T-cell (primary cell): ENCODE measurements at regions of chr17 and their contacts with region 1.

Region 1: DNA sequence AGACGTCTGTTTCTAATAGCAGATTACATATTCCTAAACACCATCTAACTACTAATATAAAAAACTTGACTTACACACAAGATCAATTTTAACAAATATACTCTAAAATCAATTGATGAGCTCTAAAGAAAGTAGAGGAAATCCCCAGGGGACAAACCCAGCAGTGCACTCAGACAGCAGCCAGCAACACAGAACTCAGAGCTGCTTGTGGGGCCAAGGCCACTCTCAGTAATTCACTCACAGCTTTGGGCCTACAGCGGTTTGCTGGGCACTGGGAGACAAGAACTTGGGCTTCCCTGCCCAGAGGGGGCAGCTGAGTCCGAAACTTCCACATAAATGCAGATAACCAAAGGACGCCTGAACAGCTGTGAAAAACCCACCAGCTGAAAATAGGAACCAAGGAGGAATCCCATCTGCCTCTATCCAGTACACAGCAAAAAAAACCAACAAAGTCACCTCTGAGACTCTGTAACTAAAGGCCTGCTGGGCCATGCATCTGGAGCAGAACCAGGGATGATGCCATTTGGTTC is 21.4 kb downstream of the NPLOC4 start:
- DNase-seq: no peak
- ATAC-seq: no peak
- H3K4me3 ChIP-seq: no peak overlapping the region
- H3K4me3 Mint-ChIP-seq: no peak overlapping the region
- H3K27ac ChIP-seq: no peak overlapping the region
- H3K27ac Mint-ChIP-seq: peak overlapping the region in 1 of 2 donors; percentile 22
- H3K4me1 ChIP-seq: peaks cover 0 to 18% of the 10 kb centered on the region in 2 experiments
- H3K4me1 Mint-ChIP-seq: peaks cover 21 to 28% (median 25%) of the 10 kb centered on the region in 3 donors
- H3K27me3 ChIP-seq: no peaks in the 10 kb centered on the region
- H3K27me3 Mint-ChIP-seq: no peaks in the 10 kb centered on the region

Region 2: DNA sequence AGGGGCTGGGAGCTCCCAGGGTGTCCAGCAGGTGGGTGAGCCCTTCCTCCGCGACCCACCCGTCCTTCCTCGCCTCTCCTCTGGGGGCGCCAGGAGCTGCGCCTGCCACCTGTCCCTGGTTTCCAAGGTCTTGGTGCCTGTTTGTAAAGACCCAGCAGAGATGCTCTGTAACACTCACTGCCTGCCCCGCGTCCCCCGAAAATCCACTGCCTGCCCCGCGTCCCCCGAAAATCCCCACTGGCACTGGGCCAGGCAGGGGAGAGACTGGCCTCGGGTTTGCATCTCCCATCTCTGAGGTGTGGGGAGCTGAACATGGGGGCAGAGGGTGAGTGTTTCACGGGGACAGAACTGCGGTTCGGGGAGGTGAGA is 174.6 kb before region 1 on chr17:
- CTCF ChIA-PET with region 1: no interaction called
- POLR2A ChIA-PET with region 1: no interaction called
- DNase-seq: no peak
- ATAC-seq: no peak
- H3K4me3 ChIP-seq: no peak overlapping the region
- H3K4me3 Mint-ChIP-seq: no peak overlapping the region
- H3K27ac ChIP-seq: no peak overlapping the region
- H3K27ac Mint-ChIP-seq: no peak overlapping the region
- H3K4me1 ChIP-seq: peaks cover 0 to 9% of the 10 kb centered on the region in 2 experiments
- H3K4me1 Mint-ChIP-seq: peaks cover 0 to 3% (median 2%) of the 10 kb centered on the region in 3 donors
- H3K27me3 ChIP-seq: peaks cover 0 to 61% of the 10 kb centered on the region in 2 experiments
- H3K27me3 Mint-ChIP-seq: peaks cover 9 to 17% of the 10 kb centered on the region in 2 donors

Region 3: GRCh38 chr17:81631482-81631881 is 16.0 kb after region 1 on chr17:
- CTCF ChIA-PET with region 1: no interaction called
- POLR2A ChIA-PET with region 1: interaction called in 1 of 2 experiments, 10 read pairs
- DNase-seq: no peak
- ATAC-seq: no peak
- H3K4me3 ChIP-seq: no peak overlapping the region
- H3K4me3 Mint-ChIP-seq: no peak overlapping the region
- H3K27ac ChIP-seq: no peak overlapping the region
- H3K27ac Mint-ChIP-seq: no peak overlapping the region
- H3K4me1 ChIP-seq: peaks cover 8 to 25% of the 10 kb centered on the region in 2 experiments
- H3K4me1 Mint-ChIP-seq: peaks cover 14 to 28% (median 28%) of the 10 kb centered on the region in 3 donors
- H3K27me3 ChIP-seq: no peaks in the 10 kb centered on the region
- H3K27me3 Mint-ChIP-seq: no peaks in the 10 kb centered on the region